K562 (cell line): ENCODE measurements at regions of chr20 and their contacts with region 1.

Region 1: GRCh38 chr20:13105864-13106457 is 97.2 kb downstream of the SPTLC3 start:
- DNase-seq: peak; percentile 3 to 9 (median 7)
- ATAC-seq: no peak
- H3K4me3 ChIP-seq: no peak overlapping the region
- H3K27ac ChIP-seq: no peak overlapping the region
- H3K4me1 ChIP-seq: no peaks in the 10 kb centered on the region
- H3K27me3 ChIP-seq: no peaks in the 10 kb centered on the region
- CTCF ChIP-seq: peak in 2 of 3 experiments; percentile 16 to 54; a peak in 2 of 6 replicates
- EP300 ChIP-seq: no peak
- POLR2A ChIP-seq: no peak
- RAD21 ChIP-seq: peak; percentile 38 to 49

Region 2: GRCh38 chr20:12012241-12013222 is 1093.4 kb before region 1 on chr20:
- CTCF ChIA-PET with region 1: interaction called, 3 read pairs
- POLR2A ChIA-PET with region 1: no interaction called
- in situ Hi-C with region 1: no loop called
- intact Hi-C with region 1: loop called (anchors 5 kb)
- DNase-seq: peak; percentile 44 to 55 (median 45)
- ATAC-seq: peak; percentile 75
- H3K4me3 ChIP-seq: no peak overlapping the region
- H3K27ac ChIP-seq: no peak overlapping the region
- H3K4me1 ChIP-seq: no peaks in the 10 kb centered on the region
- H3K27me3 ChIP-seq: no peaks in the 10 kb centered on the region
- CTCF ChIP-seq: peak; percentile 78 to 99 (median 98)
- EP300 ChIP-seq: no peak
- POLR2A ChIP-seq: no peak
- RAD21 ChIP-seq: peak in 1 of 2 experiments; percentile 37; a peak in 1 of 4 replicates

Region 3: DNA sequence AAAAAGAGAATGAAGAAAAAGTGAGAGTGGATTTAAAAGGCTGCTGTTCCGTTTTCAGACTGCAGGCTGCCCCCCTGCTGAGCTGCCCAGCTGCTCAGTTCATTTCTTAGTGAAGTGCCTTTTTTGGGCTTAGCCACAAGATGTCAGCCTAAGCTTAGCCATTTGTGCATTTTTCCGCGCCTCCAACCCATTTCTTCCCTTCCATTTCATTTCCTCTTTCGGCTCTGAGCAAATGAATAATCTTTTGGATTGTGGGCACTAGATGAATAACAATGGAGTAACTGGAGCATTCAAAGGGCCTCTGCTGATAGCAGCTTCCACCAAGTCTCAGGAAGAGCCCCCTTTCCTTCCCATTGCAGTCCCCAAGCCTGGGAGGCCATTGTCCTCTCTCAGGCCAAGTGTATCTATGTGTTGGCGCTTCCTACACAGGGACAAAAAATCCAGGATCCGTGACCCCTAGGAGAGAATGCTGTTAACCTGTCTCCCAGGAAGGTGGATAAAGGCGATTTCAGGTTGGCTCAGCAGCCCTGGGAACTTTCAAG is 180.7 kb before region 1 on chr20:
- CTCF ChIA-PET with region 1: interaction called, 7 read pairs
- POLR2A ChIA-PET with region 1: no interaction called
- in situ Hi-C with region 1: no loop called
- intact Hi-C with region 1: loop called (anchors 10 kb)
- DNase-seq: peak; percentile 7 to 24 (median 18)
- ATAC-seq: no peak
- H3K4me3 ChIP-seq: no peak overlapping the region
- H3K27ac ChIP-seq: no peak overlapping the region
- H3K4me1 ChIP-seq: no peaks in the 10 kb centered on the region
- H3K27me3 ChIP-seq: no peaks in the 10 kb centered on the region
- CTCF ChIP-seq: peak; percentile 37 to 63 (median 62); a peak in 4 of 6 replicates
- EP300 ChIP-seq: no peak
- POLR2A ChIP-seq: no peak
- RAD21 ChIP-seq: peak; percentile 60 to 61